Panc1 (cell line): ENCODE measurements at regions of chr3 and their contacts with region 1.

Region 1: DNA sequence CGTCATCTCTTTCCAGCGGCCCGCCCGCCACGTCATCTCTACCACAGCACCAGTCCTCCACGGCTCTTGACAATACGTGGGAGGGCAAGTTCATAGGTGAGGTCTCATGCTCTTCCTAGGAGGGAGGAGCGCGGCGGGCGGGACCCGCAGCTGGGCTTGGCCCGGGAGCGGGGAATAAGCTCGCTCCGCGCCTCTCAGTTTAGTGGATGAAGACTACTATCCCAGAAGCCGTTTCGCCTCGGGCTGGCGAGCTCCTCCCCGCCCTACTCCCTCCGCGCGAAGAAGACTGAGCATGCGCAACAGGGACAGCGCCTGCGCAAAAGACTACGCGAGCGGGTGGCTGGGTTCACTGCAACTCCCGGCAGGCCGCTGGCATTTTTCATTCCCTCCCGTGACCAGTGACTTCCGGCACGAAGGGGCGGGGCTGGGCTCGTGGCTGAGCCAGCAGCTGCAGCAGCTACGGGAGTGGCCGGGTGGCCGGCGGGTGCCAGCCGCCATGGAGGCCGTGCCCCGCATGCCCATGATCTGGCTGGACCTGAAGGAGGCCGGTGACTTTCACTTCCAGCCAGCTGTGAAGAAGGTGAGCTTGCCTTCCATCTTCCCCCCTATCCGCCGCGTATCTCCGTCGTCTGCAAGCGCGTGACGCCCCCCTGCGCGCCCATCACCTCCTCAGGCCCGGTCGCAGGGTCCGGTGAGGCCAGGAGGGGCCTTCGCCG is at the start of gene PTPN23:
- DNase-seq: peak; percentile 86
- ATAC-seq: peak; percentile 93
- H3K4me3 ChIP-seq: peak within 1 kb of the TSS; percentile 89 to 92
- H3K27ac ChIP-seq: peak within 1 kb of the TSS; percentile 93
- H3K4me1 ChIP-seq: peaks cover 6% of the 10 kb centered on the region; the same call in 1 of the 2 replicates
- H3K27me3 ChIP-seq: no peaks in the 10 kb centered on the region
- CTCF ChIP-seq: no peak
- total RNA-seq, gene PTPN23: 35.7 TPM

Region 2: GRCh38 chr3:47210863-47211405 is 169.8 kb before region 1 on chr3:
- CTCF ChIA-PET with region 1: interaction called, 10 read pairs
- POLR2A ChIA-PET with region 1: no interaction called
- in situ Hi-C with region 1: no loop called
- intact Hi-C with region 1: no loop called
- DNase-seq: no peak
- ATAC-seq: no peak
- H3K4me3 ChIP-seq: no peak overlapping the region
- H3K27ac ChIP-seq: no peak overlapping the region
- H3K4me1 ChIP-seq: no peaks in the 10 kb centered on the region
- H3K27me3 ChIP-seq: no peaks in the 10 kb centered on the region
- CTCF ChIP-seq: no peak

Region 3: DNA sequence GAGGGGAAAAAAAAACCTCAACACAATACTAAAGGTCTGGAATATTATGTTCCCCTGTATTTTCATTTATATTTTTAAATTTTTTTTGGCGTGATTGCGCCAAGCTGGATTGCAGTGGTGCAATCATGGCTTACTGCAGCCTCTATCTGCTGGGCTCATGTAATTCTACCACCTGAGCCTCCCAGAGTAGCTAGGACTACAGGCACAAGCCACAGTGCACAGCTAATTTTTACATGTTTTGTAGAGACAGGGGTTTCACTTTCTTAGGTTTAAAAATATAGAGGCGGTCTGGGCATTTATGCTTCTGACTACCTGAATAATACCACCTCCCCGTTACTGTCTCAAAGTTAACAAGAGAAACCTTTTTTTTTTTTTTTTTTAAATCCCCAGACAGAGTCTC is 686.5 kb after region 1 on chr3:
- CTCF ChIA-PET with region 1: no interaction called
- POLR2A ChIA-PET with region 1: interaction called, 18 read pairs
- in situ Hi-C with region 1: no loop called
- intact Hi-C with region 1: no loop called
- DNase-seq: no peak
- ATAC-seq: no peak
- H3K4me3 ChIP-seq: no peak overlapping the region
- H3K27ac ChIP-seq: no peak overlapping the region
- H3K4me1 ChIP-seq: peaks cover 4% of the 10 kb centered on the region; the same call in 1 of the 2 replicates
- H3K27me3 ChIP-seq: no peaks in the 10 kb centered on the region
- CTCF ChIP-seq: no peak